ENCODE measurements at regions of chr9 and their contacts with region 1.

Region 1: DNA sequence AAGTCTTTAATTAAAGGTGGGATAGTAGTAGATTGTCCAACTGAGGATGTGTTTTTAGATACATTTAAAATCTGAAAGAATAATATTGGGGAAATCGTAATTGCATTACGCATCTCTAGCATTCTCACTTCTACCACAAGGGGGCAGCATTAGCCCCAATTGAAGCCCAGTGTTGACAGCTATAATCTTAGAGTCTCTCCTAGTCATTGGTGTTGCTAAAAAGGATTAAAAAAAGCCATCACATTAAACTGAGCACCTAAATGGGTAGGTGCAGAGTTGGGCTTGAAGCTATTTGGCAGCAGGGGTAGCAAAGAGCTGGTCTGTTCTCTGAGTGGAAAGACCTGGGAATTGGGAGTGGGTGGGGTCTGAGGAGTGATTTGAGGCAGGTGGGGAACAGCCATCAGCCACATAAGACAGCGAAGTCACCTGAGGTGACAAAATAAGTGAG is 177.2 kb downstream of the OSTF1 start:
- DNase-seq: peak; percentile 4
- H3K4me3 Mint-ChIP-seq: no peak overlapping the region
- H3K27ac Mint-ChIP-seq: no peak overlapping the region
- H3K4me1 Mint-ChIP-seq: peaks cover 4% of the 10 kb centered on the region
- H3K27me3 Mint-ChIP-seq: peaks cover 1% of the 10 kb centered on the region

Region 2: GRCh38 chr9:75855509-75855908 is 590.0 kb after region 1 on chr9:
- intact Hi-C with region 1: loop called (anchors 1 kb)
- DNase-seq: no peak
- H3K4me3 Mint-ChIP-seq: no peak overlapping the region
- H3K27ac Mint-ChIP-seq: no peak overlapping the region
- H3K4me1 Mint-ChIP-seq: no peaks in the 10 kb centered on the region
- H3K27me3 Mint-ChIP-seq: peaks cover 3% of the 10 kb centered on the region

Measured in activated T-helper 1 cell treated with anti-CD3 and anti-CD28 coated beads, Interleukin-12 subunit alpha, Interleukin-12 subunit beta, Interleukin-2, Interleukin-4 antibody, amounts not matched to agents 30 ng/mL and 10 ng/mL and 1 ng/mL, durations not matched to agents 14 hours and 24 hours and 36 hours (primary cell).